Astrocyte of the cerebellum (primary cell): ENCODE measurements at regions of chr21 and their contacts with region 1.

Region 1: DNA sequence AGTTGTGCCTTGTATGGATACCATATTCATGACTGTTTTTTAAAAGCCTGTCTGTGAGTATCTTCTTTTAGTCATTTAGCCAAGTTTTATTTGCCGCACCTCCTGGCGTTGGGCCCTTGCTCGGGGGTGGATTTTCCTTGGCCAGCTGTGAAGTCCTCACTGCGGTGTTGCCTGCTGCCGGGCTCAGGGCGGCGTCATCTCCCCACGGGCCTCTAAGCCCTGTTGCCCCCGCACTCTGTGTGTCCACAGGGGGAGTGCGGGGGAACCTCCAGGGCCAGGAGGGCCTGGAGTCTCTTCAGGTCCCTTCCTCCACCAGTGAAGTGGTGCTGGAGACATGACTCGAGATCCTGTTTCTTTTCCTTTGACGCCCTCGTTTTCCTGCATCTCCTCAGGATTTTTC is 65.8 kb upstream of the DIP2A start:
- DNase-seq: no peak
- H3K4me3 ChIP-seq: no peak overlapping the region
- CTCF ChIP-seq: no peak

Region 2: GRCh38 chr21:46425571-46425970 is 32.6 kb after region 1 on chr21:
- in situ Hi-C with region 1: loop called (anchors 5 kb)
- DNase-seq: no peak
- H3K4me3 ChIP-seq: no peak overlapping the region
- CTCF ChIP-seq: no peak